Body of pancreas (tissue), 4 donors: ENCODE measurements at regions of chr7 and their contacts with region 1.

Region 1: DNA sequence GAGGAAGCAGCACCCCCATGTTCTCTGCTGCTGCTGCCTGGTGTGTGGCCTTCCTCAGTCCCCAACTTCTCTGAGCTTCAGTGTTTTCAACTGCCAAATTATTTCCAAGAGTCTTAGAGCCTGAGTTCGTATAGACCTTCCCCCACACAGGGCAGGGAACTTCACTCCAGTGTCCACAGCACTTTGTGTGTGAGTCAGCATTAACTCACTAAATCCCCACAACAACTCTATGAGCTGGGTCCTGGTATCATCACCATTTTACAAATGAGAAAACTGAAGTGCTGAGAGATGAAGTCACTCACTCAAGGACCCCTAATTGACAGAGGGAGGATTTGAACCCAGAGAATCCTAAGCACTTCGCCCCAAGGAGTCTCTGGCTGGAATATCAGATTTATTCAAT is 48.3 kb downstream of the ADCYAP1R1 start:
- DNase-seq: no peak
- ATAC-seq: no peak
- H3K4me3 ChIP-seq: no peak overlapping the region
- H3K27ac ChIP-seq: no peak overlapping the region
- H3K4me1 ChIP-seq: no peaks in the 10 kb centered on the region
- H3K27me3 ChIP-seq: no peaks in the 10 kb centered on the region
- CTCF ChIP-seq: no peak
- POLR2A ChIP-seq: no peak

Region 2: GRCh38 chr7:30829471-30829870 is 271.0 kb before region 1 on chr7:
- intact Hi-C with region 1: loop called (anchors 10 kb)
- DNase-seq: no peak
- ATAC-seq: no peak
- H3K4me3 ChIP-seq: no peak overlapping the region
- H3K27ac ChIP-seq: no peak overlapping the region
- H3K4me1 ChIP-seq: no peaks in the 10 kb centered on the region
- H3K27me3 ChIP-seq: no peaks in the 10 kb centered on the region
- CTCF ChIP-seq: no peak
- POLR2A ChIP-seq: no peak